PC-9 (cell line): ENCODE measurements at regions of chr1 and their contacts with region 1.

Region 1: GRCh38 chr1:26472901-26473845 is 933 bp downstream of the HMGN2 start:
- DNase-seq: peak; percentile 65 to 93
- H3K4me3 ChIP-seq: peak overlapping the region; percentile 75
- H3K27ac ChIP-seq: peak overlapping the region; percentile 86; the same call in 1 of the 2 replicates
- H3K4me1 ChIP-seq: peaks cover 23% of the 10 kb centered on the region
- H3K27me3 ChIP-seq: no peaks in the 10 kb centered on the region
- CTCF ChIP-seq: no peak

Region 2: DNA sequence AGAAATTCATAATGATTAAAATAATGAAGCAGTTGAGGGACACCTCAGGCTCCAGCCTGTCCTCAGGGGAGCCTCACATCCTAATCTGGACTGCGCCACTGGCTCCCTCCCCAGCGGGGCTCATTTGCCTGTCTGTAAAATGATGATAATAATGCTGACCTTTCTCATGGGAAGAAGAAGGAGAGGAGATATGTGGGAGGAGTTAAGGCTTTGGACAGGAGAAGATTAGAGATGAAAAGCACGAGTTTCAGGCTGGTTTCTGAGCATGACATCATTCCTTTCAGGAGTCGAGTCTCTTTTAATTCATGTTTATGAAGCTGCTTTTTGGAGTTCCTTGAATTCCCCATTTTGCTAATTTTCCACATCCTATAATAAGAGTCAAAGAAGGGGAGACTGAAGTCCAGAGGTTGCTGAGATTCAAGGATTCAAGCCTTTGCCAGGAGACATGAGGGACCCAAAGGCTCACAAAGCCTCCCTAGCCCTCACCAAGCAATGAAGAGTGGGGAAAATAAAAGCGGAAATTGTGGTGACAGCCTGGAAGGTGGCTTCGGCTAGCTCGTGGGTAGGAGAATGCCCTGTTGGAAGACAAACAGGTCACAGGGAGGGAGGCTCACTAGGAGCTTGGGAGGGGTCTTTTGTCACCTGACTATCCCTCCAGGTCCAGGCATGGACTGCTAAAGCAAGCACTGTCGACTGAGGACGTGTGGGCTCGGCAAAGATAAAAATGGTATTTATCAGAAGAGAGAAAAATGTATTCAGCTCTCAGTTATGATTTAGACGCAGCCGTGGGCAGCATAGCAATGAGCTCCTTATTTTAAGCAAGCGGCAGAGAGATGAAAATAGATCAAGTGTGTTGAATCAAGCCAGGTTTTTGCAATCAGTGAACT is 539.5 kb before region 1 on chr1:
- CTCF ChIA-PET with region 1: interaction called, 14 read pairs
- POLR2A ChIA-PET with region 1: no interaction called
- intact Hi-C with region 1: no loop called
- DNase-seq: no peak
- H3K4me3 ChIP-seq: no peak overlapping the region
- H3K27ac ChIP-seq: no peak overlapping the region
- H3K4me1 ChIP-seq: no peaks in the 10 kb centered on the region
- H3K27me3 ChIP-seq: no peaks in the 10 kb centered on the region
- CTCF ChIP-seq: no peak

Region 3: GRCh38 chr1:26066857-26067256 is 406.3 kb before region 1 on chr1:
- CTCF ChIA-PET with region 1: no interaction called
- POLR2A ChIA-PET with region 1: no interaction called
- intact Hi-C with region 1: no loop called
- DNase-seq: no peak
- H3K4me3 ChIP-seq: no peak overlapping the region
- H3K27ac ChIP-seq: no peak overlapping the region
- H3K4me1 ChIP-seq: peaks cover 7% of the 10 kb centered on the region; the same call in 1 of the 2 replicates
- H3K27me3 ChIP-seq: no peaks in the 10 kb centered on the region
- CTCF ChIP-seq: no peak

Region 4: GRCh38 chr1:26275580-26276431 is 197.4 kb before region 1 on chr1:
- CTCF ChIA-PET with region 1: no interaction called
- POLR2A ChIA-PET with region 1: no interaction called
- intact Hi-C with region 1: no loop called
- DNase-seq: peak; percentile 69
- H3K4me3 ChIP-seq: no peak overlapping the region
- H3K27ac ChIP-seq: peak overlapping the region; percentile 79
- H3K4me1 ChIP-seq: peaks cover 55% of the 10 kb centered on the region
- H3K27me3 ChIP-seq: no peaks in the 10 kb centered on the region
- CTCF ChIP-seq: peak; percentile 85

Region 5: GRCh38 chr1:26417111-26417759 is 55.9 kb before region 1 on chr1:
- CTCF ChIA-PET with region 1: interaction called, 13 read pairs
- POLR2A ChIA-PET with region 1: interaction called, 4 read pairs
- intact Hi-C with region 1: no loop called
- DNase-seq: peak; percentile 84 to 93
- H3K4me3 ChIP-seq: no peak overlapping the region
- H3K27ac ChIP-seq: peak overlapping the region; percentile 91
- H3K4me1 ChIP-seq: peaks cover 9% of the 10 kb centered on the region
- H3K27me3 ChIP-seq: no peaks in the 10 kb centered on the region
- CTCF ChIP-seq: peak; percentile 79

Region 6: DNA sequence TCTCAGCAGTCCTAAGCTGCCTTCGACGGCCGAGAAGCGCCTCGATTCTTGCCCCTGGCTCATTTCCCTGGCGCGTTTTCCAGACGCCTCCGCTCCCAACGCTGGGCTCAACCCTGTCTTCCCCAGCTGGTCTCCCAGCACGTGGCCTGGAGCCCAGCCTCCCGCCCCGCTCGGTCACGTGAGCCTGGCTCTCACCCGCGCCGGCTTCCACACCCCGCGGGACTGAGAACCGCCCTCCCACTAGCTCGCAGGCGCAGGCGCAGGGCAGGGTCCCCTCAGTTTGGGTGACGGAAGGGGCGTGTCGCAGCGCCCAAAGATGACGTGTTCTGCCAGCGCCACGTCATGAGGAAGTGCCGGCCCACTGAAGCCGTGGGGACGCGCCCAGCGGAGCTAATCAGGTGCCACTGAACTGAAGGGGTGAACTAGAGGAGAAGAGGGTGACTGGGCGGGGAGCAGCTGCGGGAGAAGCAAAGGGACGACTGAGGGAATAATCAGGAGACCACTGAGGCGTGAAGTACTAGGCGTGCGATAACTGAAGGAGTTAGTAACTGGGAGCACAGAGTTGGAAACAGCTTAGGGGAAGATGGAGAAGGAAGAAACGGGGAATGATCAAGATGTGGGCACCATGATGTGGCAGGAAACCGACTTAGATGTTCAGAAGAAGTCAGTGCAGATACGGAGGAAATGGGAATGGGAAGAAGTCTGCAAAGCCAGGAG is 41.0 kb before region 1 on chr1 and contains the start of gene DHDDS:
- CTCF ChIA-PET with region 1: no interaction called
- POLR2A ChIA-PET with region 1: no interaction called
- intact Hi-C with region 1: loop called (anchors 1 kb)
- DNase-seq: peak; percentile 85 to 98
- H3K4me3 ChIP-seq: peak within 1 kb of the TSS; percentile 90
- H3K27ac ChIP-seq: peak within 1 kb of the TSS; percentile 75
- H3K4me1 ChIP-seq: peaks cover 12% of the 10 kb centered on the region
- H3K27me3 ChIP-seq: no peaks in the 10 kb centered on the region
- CTCF ChIP-seq: no peak
- total RNA-seq, gene DHDDS: 35.4 and 41.4 TPM in 2 replicates

Region 7: DNA sequence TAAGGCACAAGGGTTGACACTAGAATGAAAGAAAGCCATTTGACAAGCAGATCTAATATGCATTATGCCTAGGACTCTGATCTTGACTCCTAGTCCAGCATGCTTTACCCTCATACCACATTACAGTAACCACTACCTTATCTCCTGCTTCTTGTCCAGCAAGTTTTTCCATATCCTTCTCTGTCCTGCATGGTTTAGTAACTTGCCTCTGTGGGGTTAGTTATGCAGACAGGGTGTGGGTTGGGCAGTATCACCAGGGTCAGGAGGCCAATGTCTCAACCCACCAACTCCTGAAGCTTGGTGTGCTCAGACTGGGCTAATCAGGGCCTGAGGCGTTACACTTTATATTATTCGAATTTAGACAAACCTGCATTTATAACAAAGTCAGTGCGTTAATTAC is 22.3 kb before region 1 on chr1:
- CTCF ChIA-PET with region 1: no interaction called
- POLR2A ChIA-PET with region 1: interaction called, 22 read pairs
- intact Hi-C with region 1: no loop called
- DNase-seq: peak; percentile 22 to 52
- H3K4me3 ChIP-seq: no peak overlapping the region
- H3K27ac ChIP-seq: no peak overlapping the region
- H3K4me1 ChIP-seq: no peaks in the 10 kb centered on the region
- H3K27me3 ChIP-seq: no peaks in the 10 kb centered on the region
- CTCF ChIP-seq: no peak

Region 8: GRCh38 chr1:26529655-26530409 is 56.7 kb after region 1 on chr1 and contains the start of gene RPS6KA1:
- CTCF ChIA-PET with region 1: interaction called, 3 read pairs
- POLR2A ChIA-PET with region 1: interaction called, 4 read pairs
- intact Hi-C with region 1: loop called (anchors 2 kb)
- DNase-seq: peak in 1 of 2 experiments; percentile 73
- H3K4me3 ChIP-seq: peak within 1 kb of the TSS; percentile 80
- H3K27ac ChIP-seq: peak within 1 kb of the TSS; percentile 65
- H3K4me1 ChIP-seq: peaks cover 18% of the 10 kb centered on the region
- H3K27me3 ChIP-seq: no peaks in the 10 kb centered on the region
- CTCF ChIP-seq: no peak
- total RNA-seq, gene RPS6KA1: 60.5 and 68.5 TPM in 2 replicates